Activated CD8-positive, alpha-beta memory T cell treated with anti-CD3 and anti-CD28 coated beads, Interleukin-2, amount 10 ng/mL, durations not matched to agents 7 days and 5 days (primary cell): ENCODE measurements at regions of chr3 and their contacts with region 1.

Region 1: GRCh38 chr3:185764163-185764979 is 60.5 kb downstream of the IGF2BP2 start:
- DNase-seq: no peak
- ATAC-seq: no peak
- H3K4me3 Mint-ChIP-seq: no peak overlapping the region
- H3K27ac Mint-ChIP-seq: no peak overlapping the region
- H3K4me1 Mint-ChIP-seq: no peaks in the 10 kb centered on the region
- H3K27me3 Mint-ChIP-seq: peaks cover 69% of the 10 kb centered on the region

Region 2: GRCh38 chr3:185781759-185782158 is 17.4 kb after region 1 on chr3:
- CTCF ChIA-PET with region 1: interaction called, 10 read pairs
- DNase-seq: no peak
- ATAC-seq: no peak
- H3K4me3 Mint-ChIP-seq: no peak overlapping the region
- H3K27ac Mint-ChIP-seq: no peak overlapping the region
- H3K4me1 Mint-ChIP-seq: no peaks in the 10 kb centered on the region
- H3K27me3 Mint-ChIP-seq: peaks cover 28% of the 10 kb centered on the region